OCI-LY7 (cell line): ENCODE measurements at regions of chr14 and their contacts with region 1.

Region 1: GRCh38 chr14:104876251-104876699 is 11.2 kb downstream of the CEP170B start:
- DNase-seq: peak; percentile 43
- H3K4me3 ChIP-seq: no peak overlapping the region
- H3K27ac ChIP-seq: no peak overlapping the region
- H3K4me1 ChIP-seq: peaks cover 4% of the 10 kb centered on the region
- CTCF ChIP-seq: no peak

Region 2: GRCh38 chr14:104794641-104795467 is 81.4 kb before region 1 on chr14:
- CTCF ChIA-PET with region 1: interaction called, 31 read pairs
- POLR2A ChIA-PET with region 1: no interaction called
- intact Hi-C with region 1: no loop called
- DNase-seq: peak; percentile 58
- H3K4me3 ChIP-seq: peak overlapping the region; percentile 93
- H3K27ac ChIP-seq: no peak overlapping the region
- H3K4me1 ChIP-seq: peaks cover 21% of the 10 kb centered on the region
- CTCF ChIP-seq: no peak

Region 3: GRCh38 chr14:104820669-104821228 is 55.5 kb before region 1 on chr14:
- CTCF ChIA-PET with region 1: no interaction called
- POLR2A ChIA-PET with region 1: no interaction called
- intact Hi-C with region 1: no loop called
- DNase-seq: no peak
- H3K4me3 ChIP-seq: no peak overlapping the region
- H3K27ac ChIP-seq: no peak overlapping the region
- H3K4me1 ChIP-seq: peaks cover 8% of the 10 kb centered on the region
- CTCF ChIP-seq: no peak